Heart right ventricle (tissue), 16 donors: ENCODE measurements at regions of chr7 and their contacts with region 1.

Region 1: GRCh38 chr7:80604436-80604835 is 34.0 kb upstream of the CD36 start:
- DNase-seq: no peak
- ATAC-seq: peak; percentile 75 to 94 (median 90)
- H3K4me3 ChIP-seq: peak overlapping the region in 7 of 10 donors; percentile 27 to 53 (median 39)
- H3K27ac ChIP-seq: peak overlapping the region; percentile 51 to 87 (median 74)
- H3K4me1 ChIP-seq: peaks cover 2 to 86% (median 38%) of the 10 kb centered on the region in 9 donors
- H3K27me3 ChIP-seq: no peaks in the 10 kb centered on the region
- CTCF ChIP-seq: no peak

Region 2: DNA sequence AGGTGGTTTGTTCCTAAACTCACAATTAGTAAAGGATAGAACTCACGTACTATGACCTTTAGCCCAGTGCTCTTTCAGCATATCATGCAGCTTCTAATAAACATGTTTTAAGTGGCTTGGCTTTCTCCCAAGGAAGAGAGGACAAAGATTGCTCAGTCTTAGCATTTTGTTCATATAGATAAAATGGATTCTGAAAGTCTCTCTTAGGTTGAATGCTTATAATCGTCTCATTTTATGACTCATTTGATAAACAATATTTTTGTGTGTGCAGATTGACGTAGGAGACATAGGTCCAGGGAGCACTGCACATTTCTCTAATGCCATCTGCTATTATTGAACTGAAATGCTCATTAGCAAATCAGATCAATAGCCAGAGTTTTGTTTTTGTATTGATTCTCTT is 137.4 kb before region 1 on chr7:
- intact Hi-C with region 1: loop called in 2 of 10 experiments (anchors 5 kb)
- DNase-seq: no peak
- ATAC-seq: peak in 7 of 8 donors; percentile 25 to 91 (median 81)
- H3K4me3 ChIP-seq: peak overlapping the region in 1 of 10 donors; percentile 0
- H3K27ac ChIP-seq: peak overlapping the region in 7 of 10 donors; percentile 18 to 54 (median 32)
- H3K4me1 ChIP-seq: peaks cover 0 to 30% (median 15%) of the 10 kb centered on the region in 9 donors
- H3K27me3 ChIP-seq: no peaks in the 10 kb centered on the region
- CTCF ChIP-seq: no peak

Region 3: GRCh38 chr7:80508440-80508839 is 96.0 kb before region 1 on chr7:
- intact Hi-C with region 1: no loop called
- DNase-seq: no peak
- ATAC-seq: no peak
- H3K4me3 ChIP-seq: no peak overlapping the region
- H3K27ac ChIP-seq: no peak overlapping the region
- H3K4me1 ChIP-seq: peaks cover 0 to 7% (median 0%) of the 10 kb centered on the region in 9 donors
- H3K27me3 ChIP-seq: no peaks in the 10 kb centered on the region
- CTCF ChIP-seq: no peak

Region 4: DNA sequence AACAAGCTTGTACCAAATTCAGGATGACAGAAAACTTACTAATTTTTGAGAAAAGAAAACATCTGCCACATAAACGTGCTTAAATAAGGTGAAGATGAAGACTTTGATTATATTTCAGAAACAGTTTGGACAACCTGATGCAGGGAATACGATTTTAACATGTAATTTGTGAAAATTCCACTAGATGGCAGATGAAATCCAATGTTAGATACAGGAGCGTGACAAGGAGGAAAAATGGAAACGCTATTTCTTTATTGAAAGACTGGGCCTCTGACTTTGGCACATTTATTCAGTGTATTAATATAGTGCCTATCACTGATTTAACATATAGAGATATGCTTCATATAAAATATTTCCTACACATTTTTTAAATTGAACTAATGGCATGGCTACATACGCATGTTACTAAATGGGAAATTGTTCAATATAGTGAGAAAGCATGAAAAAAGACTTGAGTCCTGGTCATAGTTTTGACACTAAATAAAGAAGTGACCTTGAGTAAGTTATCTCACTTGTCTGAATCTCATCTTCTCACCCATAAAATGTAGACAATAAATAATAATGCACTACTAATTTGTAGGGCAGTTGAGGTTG is 94.7 kb after region 1 on chr7:
- intact Hi-C with region 1: no loop called
- DNase-seq: no peak
- ATAC-seq: peak in 7 of 8 donors; percentile 47 to 80 (median 73)
- H3K4me3 ChIP-seq: no peak overlapping the region
- H3K27ac ChIP-seq: no peak overlapping the region
- H3K4me1 ChIP-seq: peaks cover 0 to 11% (median 5%) of the 10 kb centered on the region in 9 donors
- H3K27me3 ChIP-seq: no peaks in the 10 kb centered on the region
- CTCF ChIP-seq: peak; percentile 50 to 84 (median 71)

Region 5: DNA sequence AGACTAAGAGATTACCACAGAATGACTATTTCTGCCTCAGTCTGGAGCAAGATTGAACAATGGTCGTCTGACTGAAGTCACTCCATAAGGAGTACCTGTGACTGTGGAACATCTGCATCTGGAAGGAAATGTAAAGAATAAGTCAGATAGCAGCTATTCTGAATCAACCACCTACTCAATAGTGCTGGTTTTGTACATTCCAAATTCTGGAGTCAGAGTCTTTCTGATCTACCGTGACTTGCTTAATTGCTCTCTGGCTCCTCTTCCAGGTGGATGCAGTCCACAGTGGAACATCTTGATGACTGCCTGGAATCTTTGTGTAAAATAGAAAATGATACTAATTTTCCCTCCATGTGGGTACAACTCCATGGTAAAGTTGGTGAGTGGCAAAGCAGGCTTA is 470.7 kb after region 1 on chr7:
- intact Hi-C with region 1: no loop called
- DNase-seq: no peak
- ATAC-seq: no peak
- H3K4me3 ChIP-seq: no peak overlapping the region
- H3K27ac ChIP-seq: no peak overlapping the region
- H3K4me1 ChIP-seq: no peaks in the 10 kb centered on the region
- H3K27me3 ChIP-seq: no peaks in the 10 kb centered on the region
- CTCF ChIP-seq: no peak